PC-9 (cell line): ENCODE measurements at regions of chr19 and their contacts with region 1.

Region 1: DNA sequence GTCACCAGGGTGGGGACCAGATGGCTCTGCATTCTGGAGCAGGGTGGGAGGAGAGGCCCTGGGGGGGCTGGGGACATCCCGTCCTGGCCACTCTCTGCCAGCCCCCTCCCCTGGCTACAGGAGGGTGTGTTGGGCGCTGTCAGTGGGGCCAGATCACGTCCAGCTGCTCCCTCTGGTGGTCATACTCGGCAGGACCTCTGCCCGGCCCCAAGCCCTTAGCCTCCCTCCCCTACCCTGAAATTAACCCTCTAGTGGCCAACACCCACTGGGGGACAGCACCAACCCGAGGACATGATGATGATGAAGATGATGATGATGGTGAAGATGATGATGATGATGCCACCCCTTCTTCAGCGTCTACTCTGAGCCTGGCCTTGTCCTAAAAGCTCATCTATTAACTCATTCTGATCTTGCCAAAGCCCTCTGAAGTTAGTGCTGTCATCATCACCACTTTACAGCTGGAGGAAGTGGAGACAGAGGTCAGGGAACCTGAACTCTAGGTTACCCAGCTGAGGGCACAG is 590 bp upstream of the LGI4 start:
- DNase-seq: peak in 1 of 2 experiments; percentile 71
- H3K4me3 ChIP-seq: no peak overlapping the region
- H3K27ac ChIP-seq: no peak overlapping the region
- H3K4me1 ChIP-seq: peaks cover 8% of the 10 kb centered on the region; the same call in 1 of the 2 replicates
- H3K27me3 ChIP-seq: no peaks in the 10 kb centered on the region
- CTCF ChIP-seq: peak; percentile 93

Region 2: DNA sequence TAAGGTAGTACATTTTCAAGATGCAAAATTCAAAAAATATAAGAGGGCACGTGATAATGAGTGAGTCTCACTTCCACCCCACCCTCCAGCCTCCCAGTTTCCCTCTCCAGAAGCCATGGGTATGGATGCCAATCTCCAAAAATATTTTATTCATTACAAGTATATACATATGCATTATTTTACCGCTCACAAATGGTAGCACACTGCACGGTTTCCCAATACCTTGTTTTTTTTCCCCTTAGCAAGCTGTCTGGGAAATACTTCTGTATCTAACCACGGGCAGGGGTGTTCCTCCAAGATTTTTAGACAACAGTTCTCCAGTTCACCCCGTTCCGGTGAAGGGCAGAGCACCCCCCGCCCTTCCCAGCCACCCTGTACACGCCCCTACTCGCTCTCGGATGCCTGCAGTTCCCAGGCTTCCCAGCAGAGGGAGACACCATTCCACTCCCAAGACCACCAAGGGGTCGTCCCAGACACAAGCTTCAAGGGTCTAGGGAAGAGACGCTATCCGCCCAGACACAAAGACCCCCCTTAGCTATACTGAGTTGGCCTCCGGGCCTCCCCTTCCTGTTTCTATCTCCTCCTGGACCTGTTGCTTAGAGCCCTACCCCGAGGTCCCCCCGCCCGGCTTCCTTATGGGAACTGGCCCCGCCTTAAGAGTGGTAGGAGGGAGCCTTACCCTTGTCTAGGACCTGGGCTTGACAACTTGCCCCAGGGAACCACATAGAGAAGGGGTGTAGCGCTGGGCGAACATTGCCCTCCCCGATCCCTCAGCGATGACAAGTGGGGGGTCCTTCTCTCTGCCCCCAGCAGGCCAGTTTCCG is 20.9 kb before region 1 on chr19:
- CTCF ChIA-PET with region 1: interaction called, 4 read pairs
- POLR2A ChIA-PET with region 1: no interaction called
- intact Hi-C with region 1: loop called (anchors 1 kb)
- DNase-seq: peak; percentile 59 to 81
- H3K4me3 ChIP-seq: peak overlapping the region; percentile 89
- H3K27ac ChIP-seq: peak overlapping the region; percentile 71
- H3K4me1 ChIP-seq: peaks cover 51% of the 10 kb centered on the region
- H3K27me3 ChIP-seq: no peaks in the 10 kb centered on the region
- CTCF ChIP-seq: peak; percentile 100